Left colon (tissue), 2 donors: ENCODE measurements at regions of chr1 and their contacts with region 1.

Region 1: DNA sequence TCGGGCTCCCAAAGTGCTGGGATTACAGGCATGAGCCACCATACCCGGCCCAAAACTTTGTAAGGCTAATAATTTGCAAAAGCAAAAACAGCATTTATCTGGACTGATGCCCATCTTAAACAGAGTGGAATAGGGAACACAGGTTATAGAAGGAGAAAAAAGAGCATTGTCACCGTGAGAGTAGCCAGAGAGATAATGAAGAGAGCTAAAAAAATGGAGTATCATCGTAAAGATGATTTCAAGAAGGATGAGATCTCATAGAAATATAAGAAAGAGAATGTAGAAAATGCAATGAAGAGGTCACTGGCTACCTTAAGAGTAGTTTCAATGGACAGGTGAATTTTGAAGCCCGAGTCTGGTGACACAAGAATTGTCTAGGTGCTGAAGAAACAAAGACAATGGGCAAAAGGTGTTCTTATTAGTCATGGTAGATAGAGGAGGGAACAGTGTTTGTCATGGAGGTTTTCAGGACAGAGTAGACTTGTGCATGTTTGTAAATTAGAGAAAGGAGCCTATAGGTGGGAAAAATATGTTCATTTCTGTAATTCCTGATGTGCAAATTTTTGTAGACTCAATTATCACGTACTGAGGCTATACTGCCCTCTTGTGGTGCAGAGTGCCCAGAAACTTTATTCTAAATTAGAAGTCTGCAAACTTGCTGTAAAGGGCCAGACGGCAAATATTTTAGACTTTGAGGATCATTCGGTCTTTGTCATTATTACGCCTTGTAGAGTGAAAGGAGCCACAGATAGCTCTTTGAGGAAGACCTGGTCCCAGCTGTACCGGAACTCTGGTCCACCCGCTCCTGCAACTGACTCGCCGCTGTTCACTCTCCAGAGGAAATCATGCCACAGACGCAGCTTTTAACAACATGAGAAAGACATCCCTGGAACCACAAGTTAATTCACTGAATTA is 8.1 kb upstream of the TMEM183A start:
- DNase-seq: peak in 1 of 2 donors; percentile 73
- ATAC-seq: no peak

Region 2: DNA sequence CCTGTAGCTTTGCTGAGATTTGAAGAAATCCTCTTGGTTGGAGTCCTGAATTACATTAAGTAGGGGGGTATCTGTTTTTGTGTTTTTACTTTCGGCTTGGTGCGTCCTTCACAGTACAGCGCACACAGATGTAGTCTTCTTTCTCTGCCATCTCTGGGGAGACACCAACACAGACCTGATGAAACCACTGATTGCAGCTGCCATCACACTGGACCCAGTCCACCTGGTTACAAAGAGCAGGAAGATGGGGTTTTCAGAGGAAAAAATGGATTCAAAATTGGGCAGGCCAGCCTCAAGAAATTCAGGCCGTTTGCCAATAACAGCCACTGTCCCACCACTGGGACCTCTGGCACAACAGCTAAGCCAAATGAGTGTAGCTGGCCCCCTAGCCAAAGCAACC is 270.1 kb before region 1 on chr1:
- intact Hi-C with region 1: no loop called
- DNase-seq: no peak
- ATAC-seq: no peak

Region 3: GRCh38 chr1:202923533-202923932 is 75.6 kb before region 1 on chr1:
- intact Hi-C with region 1: no loop called
- DNase-seq: no peak
- ATAC-seq: no peak

Region 4: GRCh38 chr1:202938287-202938925 is 60.7 kb before region 1 on chr1:
- intact Hi-C with region 1: loop called in 1 of 2 experiments (anchors 10 kb)
- DNase-seq: no peak
- ATAC-seq: no peak